A549 (cell line): ENCODE measurements at regions of chr11 and their contacts with region 1.

Region 1: DNA sequence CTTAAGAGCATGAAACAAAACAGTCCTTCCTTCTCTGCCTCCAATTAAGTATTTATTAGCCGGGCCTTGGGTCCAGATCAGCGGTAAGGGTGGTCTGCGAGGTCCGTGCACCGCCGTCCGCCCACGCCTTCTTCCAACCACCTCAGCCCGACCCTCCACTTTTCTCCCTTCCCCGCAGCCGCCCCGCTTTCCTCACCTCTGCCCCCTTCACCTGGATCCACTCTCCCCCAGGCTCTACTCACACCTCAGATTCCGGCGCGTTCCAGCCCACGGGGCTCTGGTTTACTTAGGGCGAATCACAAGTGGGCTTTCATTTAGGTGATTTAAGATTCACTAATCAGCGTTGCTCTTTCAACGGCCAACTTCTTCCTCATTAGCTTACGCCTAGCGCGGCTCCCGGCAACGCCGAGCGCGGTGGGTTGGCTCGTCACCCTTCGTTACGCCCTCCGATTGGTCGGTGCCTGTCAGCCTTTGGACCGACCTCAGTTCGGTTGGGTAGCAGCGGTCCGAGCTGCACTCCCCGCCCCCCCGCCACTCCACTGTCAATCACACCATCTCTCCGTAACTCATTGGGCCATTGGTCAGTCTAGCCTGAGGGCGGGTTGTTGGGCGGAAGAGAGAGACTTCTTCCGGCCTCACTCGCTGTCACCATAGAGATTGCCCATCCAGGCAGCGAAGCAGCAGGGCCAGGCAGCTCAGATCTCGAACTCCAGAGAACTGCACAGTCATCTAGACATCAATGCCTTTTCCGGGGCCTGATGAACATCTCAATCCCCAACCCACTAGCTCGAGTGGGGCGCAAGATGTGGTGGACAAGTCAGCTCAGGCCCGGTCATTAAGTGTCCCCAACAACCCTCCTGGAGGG is at the start of gene TMEM218:
- DNase-seq: peak; percentile 93 to 98
- ATAC-seq: peak; percentile 99 to 100
- H3K4me3 ChIP-seq: peak within 1 kb of the TSS; percentile 63
- H3K27ac ChIP-seq: peak within 1 kb of the TSS; percentile 74 to 93
- H3K4me1 ChIP-seq: peaks cover 12% of the 10 kb centered on the region; the same call in 2 of the 3 replicates
- CTCF ChIP-seq: no peak
- EP300 ChIP-seq: no peak
- POLR2A ChIP-seq: peak; percentile 29
- RAD21 ChIP-seq: no peak
- polyA plus RNA-seq, gene TMEM218: 31.3 and 34.6 TPM in 2 replicates

Region 2: DNA sequence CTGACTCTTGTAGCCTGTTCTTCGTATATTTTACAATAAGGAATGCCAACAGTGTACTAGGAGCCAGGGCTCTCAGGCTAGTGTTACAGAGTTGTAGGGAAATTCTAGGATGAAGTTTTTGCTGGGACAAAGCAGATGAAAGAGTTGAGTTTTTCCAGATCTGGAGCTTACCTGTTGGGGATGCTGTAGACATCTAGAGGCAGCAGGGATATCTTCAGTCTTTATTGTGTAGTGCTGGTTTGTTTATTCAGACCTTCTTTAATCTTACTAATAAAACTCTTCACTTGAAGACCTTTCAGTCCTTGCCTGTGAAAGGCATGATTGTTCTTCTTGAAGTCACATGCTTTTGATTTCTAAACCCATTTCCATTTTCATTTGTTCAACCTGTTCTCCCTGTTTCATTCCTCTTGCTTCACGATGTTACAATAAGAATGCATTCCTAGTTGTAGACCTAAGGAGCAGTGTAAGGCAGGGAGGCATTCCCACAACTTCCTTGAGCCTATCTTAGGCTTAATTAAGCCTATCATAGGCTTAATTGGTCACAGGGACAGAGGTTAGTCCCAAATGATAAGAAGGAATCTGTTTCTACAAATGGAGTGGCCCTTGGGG is 56.4 kb before region 1 on chr11:
- CTCF ChIA-PET with region 1: no interaction called
- POLR2A ChIA-PET with region 1: no interaction called
- DNase-seq: no peak
- ATAC-seq: no peak
- H3K4me3 ChIP-seq: no peak overlapping the region
- H3K27ac ChIP-seq: no peak overlapping the region
- H3K4me1 ChIP-seq: no peaks in the 10 kb centered on the region
- CTCF ChIP-seq: no peak
- EP300 ChIP-seq: no peak
- POLR2A ChIP-seq: no peak
- RAD21 ChIP-seq: no peak

Region 3: DNA sequence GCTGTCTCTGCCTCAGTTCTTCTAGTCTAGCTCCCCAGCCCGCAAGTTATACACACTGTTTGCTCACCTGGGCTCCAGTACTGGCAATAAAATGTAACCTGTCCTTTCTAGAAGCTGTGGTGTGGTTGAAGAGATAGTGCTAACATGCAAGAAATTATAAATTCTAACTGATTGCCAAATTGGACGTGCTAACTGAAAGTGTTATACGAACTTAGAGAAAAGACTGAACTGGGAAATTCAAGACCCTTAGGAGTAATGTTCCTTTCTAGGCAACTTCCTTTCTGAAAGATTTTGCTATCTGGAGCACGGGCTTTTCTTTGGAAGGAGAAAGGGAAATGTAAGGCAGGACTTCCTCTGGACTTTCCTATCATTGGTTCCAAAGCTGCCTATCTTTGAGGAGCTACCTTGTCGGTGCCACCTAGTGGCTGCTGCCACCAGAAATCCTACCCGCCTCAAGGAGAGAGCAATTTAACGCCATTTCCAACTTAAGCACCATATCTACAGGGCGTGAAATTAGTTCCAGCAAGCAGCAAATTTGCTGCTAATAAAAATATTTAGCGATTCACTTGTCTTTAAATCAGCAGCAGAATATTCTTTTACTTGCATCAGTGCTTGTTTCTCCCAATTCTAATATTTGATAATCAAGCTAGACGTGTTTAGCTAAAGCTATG is 12.5 kb after region 1 on chr11:
- CTCF ChIA-PET with region 1: interaction called, 19 read pairs
- POLR2A ChIA-PET with region 1: interaction called, 5 read pairs
- DNase-seq: peak; percentile 71 to 84
- ATAC-seq: peak; percentile 95 to 100
- H3K4me3 ChIP-seq: peak overlapping the region; percentile 35
- H3K27ac ChIP-seq: peak overlapping the region in 1 of 2 experiments; percentile 72; a peak in 3 of 6 replicates
- H3K4me1 ChIP-seq: no peaks in the 10 kb centered on the region
- CTCF ChIP-seq: peak; percentile 39
- EP300 ChIP-seq: no peak
- POLR2A ChIP-seq: no peak
- RAD21 ChIP-seq: peak; percentile 10 to 15; a peak in 1 of 5 replicates